GM12878 (cell line): ENCODE measurements at regions of chr10 and their contacts with region 1.

Region 1: GRCh38 chr10:88582806-88583583 is at the start of gene RNLS:
- DNase-seq: peak; percentile 37
- ATAC-seq: peak; percentile 97
- H3K4me3 ChIP-seq: peak within 1 kb of the TSS; percentile 69
- H3K27ac ChIP-seq: peak within 1 kb of the TSS; percentile 87
- H3K4me1 ChIP-seq: peaks cover 4% of the 10 kb centered on the region; the same call in 1 of the 2 replicates
- H3K27me3 ChIP-seq: no peaks in the 10 kb centered on the region
- CTCF ChIP-seq: peak; percentile 76 to 92 (median 81)
- EP300 ChIP-seq: no peak
- POLR2A ChIP-seq: peak; percentile 91
- RAD21 ChIP-seq: peak; percentile 60
- polyA plus RNA-seq, gene RNLS: 3.7 to 4.1 TPM

Region 2: GRCh38 chr10:88004451-88004850 is 578.5 kb before region 1 on chr10:
- CTCF ChIA-PET with region 1: no interaction called
- POLR2A ChIA-PET with region 1: no interaction called
- RAD21 ChIA-PET with region 1: no interaction called
- SMC1A ChIA-PET with region 1: no interaction called
- in situ Hi-C with region 1: no loop called
- intact Hi-C with region 1: no loop called
- DNase-seq: no peak
- ATAC-seq: no peak
- H3K4me3 ChIP-seq: no peak overlapping the region
- H3K27ac ChIP-seq: no peak overlapping the region
- H3K4me1 ChIP-seq: no peaks in the 10 kb centered on the region
- H3K27me3 ChIP-seq: no peaks in the 10 kb centered on the region
- CTCF ChIP-seq: no peak
- EP300 ChIP-seq: no peak
- POLR2A ChIP-seq: no peak
- RAD21 ChIP-seq: no peak

Region 3: GRCh38 chr10:88598055-88598454 is 15.1 kb after region 1 on chr10:
- CTCF ChIA-PET with region 1: interaction called, 20 read pairs
- POLR2A ChIA-PET with region 1: interaction called, 5 read pairs
- RAD21 ChIA-PET with region 1: interaction called, 4 read pairs
- SMC1A ChIA-PET with region 1: interaction called, 14 read pairs
- in situ Hi-C with region 1: no loop called
- intact Hi-C with region 1: no loop called
- DNase-seq: peak; percentile 67
- ATAC-seq: peak; percentile 98
- H3K4me3 ChIP-seq: no peak overlapping the region
- H3K27ac ChIP-seq: peak overlapping the region; percentile 53; the same call in 1 of the 2 replicates
- H3K4me1 ChIP-seq: peaks cover 10% of the 10 kb centered on the region
- H3K27me3 ChIP-seq: no peaks in the 10 kb centered on the region
- CTCF ChIP-seq: no peak
- EP300 ChIP-seq: no peak
- POLR2A ChIP-seq: no peak
- RAD21 ChIP-seq: no peak